ENCODE measurements at regions of chr9 and their contacts with region 1.

Region 1: DNA sequence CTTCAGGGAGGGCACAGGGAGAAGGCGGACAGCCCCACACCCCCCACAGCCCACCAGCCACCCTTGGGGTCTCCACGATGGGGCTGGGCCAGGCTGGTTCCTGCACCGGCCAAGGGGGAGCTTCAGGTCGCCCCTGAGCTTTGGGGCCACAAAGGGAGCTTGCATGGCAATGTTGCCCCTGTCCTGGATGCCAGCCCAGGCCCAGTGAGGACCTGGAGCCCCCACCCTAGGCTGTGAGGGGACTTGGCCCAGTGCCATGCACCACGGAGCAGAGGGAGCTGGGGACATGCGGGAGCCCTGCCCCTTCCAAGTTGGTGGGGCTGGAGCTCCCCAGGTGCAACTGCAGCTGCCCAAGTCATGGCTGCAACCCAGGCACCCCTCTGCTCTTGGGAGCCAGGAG is 18.4 kb downstream of the TMEM38B start:
- DNase-seq: no peak
- H3K4me3 ChIP-seq: no peak overlapping the region
- H3K27ac ChIP-seq: peak overlapping the region; percentile 82
- H3K4me1 ChIP-seq: peaks cover 41% of the 10 kb centered on the region
- H3K27me3 ChIP-seq: no peaks in the 10 kb centered on the region
- CTCF ChIP-seq: no peak

Region 2: DNA sequence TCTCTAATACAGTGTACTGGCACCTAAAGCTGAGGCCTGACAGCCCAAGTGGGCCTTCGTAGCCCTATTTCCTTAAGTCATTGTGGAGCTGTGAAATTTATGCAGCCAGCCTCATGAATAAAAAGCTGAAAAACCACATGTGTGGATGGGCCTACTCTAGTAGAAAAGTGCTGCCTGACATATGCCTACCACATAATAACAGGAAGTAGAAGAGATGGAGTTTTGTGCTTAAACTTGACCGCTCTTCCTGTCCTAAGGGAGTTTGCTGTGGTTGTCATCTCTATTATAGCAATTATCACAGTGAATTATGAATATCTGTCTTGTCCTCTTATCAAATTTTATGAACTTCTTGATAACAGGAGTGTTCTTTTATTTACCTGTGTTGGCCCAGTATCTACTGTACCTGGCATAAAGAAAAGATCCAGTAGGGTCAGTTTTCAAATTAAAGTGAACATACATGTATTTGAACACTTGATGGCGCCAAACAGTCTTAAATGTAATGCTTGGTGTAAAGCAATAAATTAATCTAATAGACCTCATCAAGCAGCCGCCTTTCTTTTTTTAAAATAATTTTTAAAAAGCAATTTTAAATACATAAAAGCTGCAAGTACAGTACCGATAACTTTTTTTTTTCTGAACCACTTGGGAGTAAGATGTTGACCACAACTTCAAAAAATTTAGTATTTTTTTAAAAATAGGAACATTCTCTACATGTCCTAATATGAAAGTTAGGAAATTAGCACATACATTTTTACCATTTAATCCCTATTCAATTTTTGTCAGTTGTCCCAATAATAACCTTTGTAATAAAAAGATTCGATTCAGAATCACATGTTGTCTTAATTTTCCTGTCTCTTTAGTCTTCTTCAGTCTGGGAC is 103.8 kb before region 1 on chr9:
- intact Hi-C with region 1: loop called (anchors 10 kb)
- DNase-seq: no peak
- H3K4me3 ChIP-seq: no peak overlapping the region
- H3K27ac ChIP-seq: no peak overlapping the region
- H3K4me1 ChIP-seq: no peaks in the 10 kb centered on the region
- H3K27me3 ChIP-seq: no peaks in the 10 kb centered on the region
- CTCF ChIP-seq: peak; percentile 66

Region 3: DNA sequence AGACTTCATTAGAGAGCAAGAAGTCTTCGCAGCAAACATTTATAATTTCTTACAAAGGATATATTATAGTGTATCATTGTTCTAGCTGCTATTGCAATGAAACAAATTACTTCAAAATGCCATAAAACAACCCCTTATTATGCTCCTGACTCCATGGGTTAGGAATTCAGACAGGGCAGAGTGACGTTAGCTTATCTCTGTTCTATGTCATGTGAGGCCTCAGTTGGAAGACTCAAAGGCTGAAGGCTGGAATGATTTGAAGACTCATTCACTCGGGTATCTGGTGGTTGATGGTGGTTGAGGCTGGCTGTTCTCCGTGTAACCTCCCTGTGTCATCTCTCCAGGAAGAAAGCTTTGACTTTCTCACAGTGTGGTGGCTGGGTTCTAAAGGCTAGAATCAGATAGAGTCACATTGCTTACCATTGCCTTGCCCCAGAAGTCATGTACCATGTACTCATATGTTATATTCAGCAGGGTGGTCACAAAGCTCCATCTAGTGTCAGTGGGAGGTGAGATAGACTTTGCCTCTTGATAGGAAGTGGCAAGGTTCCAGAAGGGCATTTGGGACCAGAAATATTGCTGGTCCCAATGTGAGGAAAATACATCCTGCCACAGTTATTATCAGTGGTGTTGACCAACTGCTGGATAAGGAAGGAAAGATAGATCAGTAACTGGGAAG is 208.4 kb after region 1 on chr9:
- intact Hi-C with region 1: no loop called
- DNase-seq: no peak
- H3K4me3 ChIP-seq: no peak overlapping the region
- H3K27ac ChIP-seq: no peak overlapping the region
- H3K4me1 ChIP-seq: peaks cover 5% of the 10 kb centered on the region
- H3K27me3 ChIP-seq: no peaks in the 10 kb centered on the region
- CTCF ChIP-seq: no peak